ENCODE measurements at regions of chr10 and their contacts with region 1.

Region 1: DNA sequence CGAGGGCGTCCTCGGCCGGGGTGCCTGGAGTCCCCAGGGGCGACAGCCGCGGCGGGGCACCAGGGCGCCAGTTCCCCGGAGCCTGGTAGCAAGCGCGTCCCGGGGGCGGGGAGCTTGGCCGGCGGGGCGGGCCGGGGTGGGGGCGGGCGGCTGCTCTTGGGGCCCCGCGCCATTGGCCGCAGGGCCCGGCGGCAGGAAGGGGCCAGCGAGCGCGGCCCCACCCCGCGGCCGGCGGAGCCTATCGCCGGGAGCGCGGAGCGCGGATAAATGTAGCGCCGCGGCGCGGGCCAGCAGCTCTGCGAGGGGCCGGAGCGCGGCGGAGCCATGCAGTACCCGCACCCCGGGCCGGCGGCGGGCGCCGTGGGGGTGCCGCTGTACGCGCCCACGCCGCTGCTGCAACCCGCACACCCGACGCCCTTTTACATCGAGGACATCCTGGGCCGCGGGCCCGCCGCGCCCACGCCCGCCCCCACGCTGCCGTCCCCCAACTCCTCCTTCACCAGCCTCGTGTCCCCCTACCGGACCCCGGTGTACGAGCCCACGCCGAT is at the start of gene HHEX:
- DNase-seq: peak; percentile 91
- ATAC-seq: peak; percentile 76
- total RNA-seq, gene HHEX: 2.6 TPM

Region 2: DNA sequence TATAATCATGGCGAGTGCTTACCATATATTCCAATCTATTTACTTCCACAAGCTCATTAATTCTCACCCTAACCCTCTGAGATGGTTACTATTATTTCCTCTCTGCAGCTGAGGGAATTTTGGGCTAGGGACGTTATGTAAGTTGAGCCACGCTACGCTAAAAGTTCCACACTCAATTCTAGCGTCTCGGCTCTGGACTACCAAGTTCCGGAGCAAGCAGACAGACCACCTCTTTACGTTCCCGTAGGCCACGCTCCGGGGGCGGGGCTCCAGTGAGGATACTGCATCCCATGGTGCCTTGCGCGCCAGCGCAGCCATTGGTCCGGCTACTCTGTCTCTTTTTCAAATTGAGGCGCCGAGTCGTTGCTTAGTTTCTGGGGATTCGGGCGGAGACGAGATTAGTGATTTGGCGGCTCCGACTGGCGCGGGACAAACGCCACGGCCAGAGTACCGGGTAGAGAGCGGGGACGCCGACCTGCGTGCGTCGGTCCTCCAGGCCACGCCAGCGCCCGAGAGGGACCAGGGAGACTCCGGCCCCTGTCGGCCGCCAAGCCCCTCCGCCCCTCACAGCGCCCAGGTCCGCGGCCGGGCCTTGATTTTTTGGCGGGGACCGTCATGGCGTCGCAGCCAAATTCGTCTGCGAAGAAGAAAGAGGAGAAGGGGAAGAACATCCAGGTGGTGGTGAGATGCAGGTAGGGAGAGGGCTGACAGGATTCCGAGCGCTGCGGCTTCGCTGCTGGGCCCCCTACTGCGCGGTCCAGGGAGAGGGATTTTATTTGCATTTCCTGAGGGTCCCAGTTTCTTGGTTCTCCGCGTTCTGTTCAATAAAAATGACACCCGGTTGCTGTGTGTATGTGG is 96.7 kb before region 1 on chr10 and contains the start of gene KIF11:
- intact Hi-C with region 1: loop called (anchors 5 kb)
- DNase-seq: peak; percentile 100
- ATAC-seq: peak; percentile 97
- total RNA-seq, gene KIF11: 1.1 TPM

Region 3: GRCh38 chr10:92816091-92816531 is 126.4 kb after region 1 on chr10:
- intact Hi-C with region 1: loop called (anchors 5 kb)
- DNase-seq: no peak
- ATAC-seq: no peak

Measured in Right ventricle myocardium inferior (tissue), 1 donor.